GM13977 (cell line): ENCODE measurements at regions of chr12 and their contacts with region 1.

Region 1: DNA sequence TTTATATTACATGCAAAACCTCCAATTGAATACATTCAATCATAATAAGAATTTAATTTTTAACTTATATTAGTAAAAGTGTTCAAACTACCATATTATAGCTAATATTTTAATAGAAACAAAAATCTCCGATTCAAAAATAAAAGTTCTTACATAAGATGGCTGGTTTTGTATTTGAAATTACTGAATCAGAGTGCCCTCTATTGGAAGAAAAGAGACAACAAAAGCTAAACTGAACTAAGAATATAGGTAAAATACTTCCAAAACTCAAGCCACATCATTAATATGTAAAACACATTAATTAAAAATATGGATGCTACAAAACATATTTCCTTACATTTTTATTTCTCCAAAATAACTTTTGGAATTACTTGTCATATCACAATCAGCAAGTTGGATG is 120.3 kb downstream of the GARIN6 start:
- DNase-seq: no peak
- CTCF ChIP-seq: peak; percentile 51

Region 2: DNA sequence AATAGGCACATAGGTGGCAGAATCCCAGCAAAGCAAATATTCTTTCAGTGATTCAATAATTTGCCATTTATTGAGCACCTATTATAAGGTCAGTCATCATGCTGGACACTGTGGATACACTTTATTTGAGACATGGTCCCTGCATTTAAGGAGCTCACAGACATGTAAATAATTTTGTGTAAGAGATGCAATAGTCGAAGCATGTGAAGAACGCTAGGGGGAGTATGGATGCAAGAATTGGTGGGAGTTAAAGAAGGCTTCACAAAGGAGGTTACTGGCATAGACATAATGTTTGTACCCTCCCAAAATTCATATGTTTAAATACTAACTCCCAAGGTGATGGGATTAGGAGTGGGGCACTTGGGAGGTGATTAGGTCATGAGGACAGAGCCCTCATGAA is 380.9 kb before region 1 on chr12:
- in situ Hi-C with region 1: loop called (anchors 25 kb)
- DNase-seq: peak; percentile 18
- CTCF ChIP-seq: peak; percentile 70

Region 3: GRCh38 chr12:99935608-99936007 is 167.8 kb after region 1 on chr12:
- in situ Hi-C with region 1: no loop called
- DNase-seq: no peak
- CTCF ChIP-seq: no peak